Gastrocnemius medialis (tissue), 4 donors: ENCODE measurements at regions of chr14 and their contacts with region 1.

Region 1: DNA sequence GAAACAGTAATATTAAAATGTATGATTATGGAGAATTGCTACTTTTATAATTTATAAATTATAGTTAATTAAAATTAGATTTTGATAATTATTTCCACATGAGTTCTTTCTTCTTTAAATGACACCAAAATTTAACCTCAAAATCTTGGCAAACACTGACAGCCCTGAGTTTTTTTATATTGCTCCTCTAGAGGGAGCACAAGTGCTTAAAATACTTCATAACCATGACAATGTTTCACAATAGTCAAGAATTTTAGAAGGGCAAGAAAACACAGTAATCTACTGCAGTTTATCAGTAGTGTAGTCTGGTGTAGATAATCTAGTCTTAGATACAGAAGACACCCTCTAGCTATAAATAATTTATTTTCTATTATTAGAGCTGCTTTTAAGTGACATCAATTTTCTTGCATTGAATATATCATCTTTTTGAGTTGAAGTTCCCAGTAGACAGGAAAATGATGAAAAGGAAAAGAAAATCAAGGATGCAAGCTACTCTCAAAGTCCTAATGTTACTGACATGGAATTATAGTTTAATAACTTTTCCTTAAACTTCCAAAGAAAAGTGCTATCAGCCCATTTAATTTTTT is 14.3 kb upstream of the PTGER2 start:
- DNase-seq: no peak
- ATAC-seq: no peak
- H3K4me3 ChIP-seq: no peak overlapping the region
- H3K27ac ChIP-seq: no peak overlapping the region
- H3K4me1 ChIP-seq: no peaks in the 10 kb centered on the region
- H3K27me3 ChIP-seq: no peaks in the 10 kb centered on the region
- CTCF ChIP-seq: peak in 4 of 5 experiments; percentile 27 to 52 (median 43)
- POLR2A ChIP-seq: no peak

Region 2: DNA sequence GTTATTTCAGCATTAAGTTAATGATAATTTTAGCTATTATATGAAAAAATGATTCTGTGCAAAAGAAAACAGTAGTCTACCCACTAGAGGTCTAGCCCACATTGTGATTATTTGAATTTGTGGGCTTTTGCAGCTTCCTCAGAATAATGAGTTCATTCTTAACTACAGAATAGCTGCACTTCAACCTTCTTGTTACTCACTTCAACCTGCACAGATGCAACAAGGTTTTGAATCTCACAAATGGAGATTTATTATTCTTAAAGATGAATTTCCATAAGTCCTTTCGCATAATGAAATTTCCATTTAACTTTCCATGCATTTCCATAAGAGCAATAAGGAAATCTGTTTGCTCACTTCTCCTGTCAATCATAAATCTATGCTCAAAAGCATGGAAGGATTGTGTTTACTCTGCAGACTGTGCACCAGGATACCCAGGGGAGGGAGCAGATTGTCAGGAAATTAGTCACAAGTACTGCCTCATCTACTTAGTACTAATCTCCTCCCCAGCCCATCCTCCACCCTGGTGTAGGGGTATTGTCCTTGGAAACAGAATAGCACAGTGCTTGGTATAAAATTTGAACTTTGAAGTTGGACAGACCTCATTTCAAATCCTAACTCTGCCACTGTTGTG is 38.4 kb after region 1 on chr14:
- in situ Hi-C with region 1: no loop called
- intact Hi-C with region 1: no loop called
- DNase-seq: no peak
- ATAC-seq: no peak
- H3K4me3 ChIP-seq: no peak overlapping the region
- H3K27ac ChIP-seq: no peak overlapping the region
- H3K4me1 ChIP-seq: no peaks in the 10 kb centered on the region
- H3K27me3 ChIP-seq: no peaks in the 10 kb centered on the region
- CTCF ChIP-seq: no peak
- POLR2A ChIP-seq: no peak

Region 3: DNA sequence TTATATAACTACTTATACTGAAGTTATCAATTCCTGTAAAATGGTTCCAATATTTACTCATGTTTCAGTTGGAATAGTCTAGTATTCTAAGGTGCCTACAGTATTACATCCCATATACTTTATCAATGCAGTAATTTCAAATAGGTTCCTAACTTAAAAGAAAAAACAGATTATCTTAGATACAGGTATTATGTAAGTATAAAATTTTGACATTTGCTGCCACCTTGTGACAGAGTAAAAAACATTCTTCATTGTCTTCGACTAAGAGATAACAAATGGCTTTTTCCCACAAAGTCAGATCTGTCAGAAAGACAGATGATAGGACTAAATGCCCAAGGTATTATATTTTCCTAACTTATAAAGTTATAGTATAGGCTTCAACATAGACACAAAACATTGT is 173.8 kb after region 1 on chr14:
- in situ Hi-C with region 1: loop called in 1 of 4 experiments (anchors 5 kb)
- intact Hi-C with region 1: no loop called
- DNase-seq: no peak
- ATAC-seq: no peak
- H3K4me3 ChIP-seq: no peak overlapping the region
- H3K27ac ChIP-seq: no peak overlapping the region
- H3K4me1 ChIP-seq: no peaks in the 10 kb centered on the region
- H3K27me3 ChIP-seq: no peaks in the 10 kb centered on the region
- CTCF ChIP-seq: peak in 1 of 5 experiments; percentile 20
- POLR2A ChIP-seq: no peak